ENCODE measurements at regions of chr6 and their contacts with region 1.

Region 1: DNA sequence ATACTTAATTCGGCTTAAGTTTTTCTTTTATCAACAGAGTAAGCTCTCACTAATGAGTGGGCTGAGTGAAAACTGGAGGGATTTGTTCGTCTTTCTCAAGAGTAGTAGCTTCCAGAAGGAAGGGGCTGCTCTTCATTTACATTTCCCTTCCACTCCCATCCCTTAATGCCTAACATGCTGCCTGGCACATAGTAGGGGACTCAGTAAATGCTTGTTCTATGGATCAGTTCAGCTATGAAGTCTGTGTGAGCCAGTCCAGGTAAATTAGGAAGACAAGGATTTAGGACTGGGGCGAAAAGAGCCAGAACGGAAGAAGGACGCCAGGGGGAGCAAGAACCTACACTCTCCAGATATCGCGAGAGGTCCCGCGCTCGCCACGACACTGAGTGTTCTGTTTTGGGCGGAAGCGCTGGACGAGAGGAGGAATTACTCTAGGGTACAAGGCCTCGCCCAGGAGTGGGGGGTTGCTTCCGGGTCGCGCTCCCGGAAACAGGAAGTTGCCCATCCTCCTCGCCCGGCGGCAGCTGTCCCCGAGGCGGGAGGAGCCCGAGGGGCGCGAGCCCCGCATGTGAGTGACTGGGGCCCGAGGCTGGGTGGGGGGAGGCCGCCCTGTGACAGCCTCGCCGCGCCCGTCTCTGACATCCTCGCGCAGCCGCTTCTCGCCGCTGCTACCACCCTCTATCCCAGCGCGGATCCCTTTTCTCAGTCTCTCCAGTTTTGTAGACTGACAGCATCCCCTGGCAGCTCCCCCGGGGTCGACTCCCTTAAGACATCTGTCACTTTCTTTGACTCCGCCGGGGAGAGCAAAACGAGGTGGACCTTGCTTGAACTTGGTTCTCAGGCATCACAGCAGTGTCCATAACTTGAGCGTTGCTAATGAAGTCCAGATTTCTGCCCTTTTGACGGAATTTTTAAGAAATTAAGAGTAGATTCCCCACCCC is at the start of gene C6orf89:
- DNase-seq: peak; percentile 97 to 99 (median 98)
- H3K4me3 ChIP-seq: peak within 1 kb of the TSS; percentile 74 to 96 (median 78)
- H3K27ac ChIP-seq: peak within 1 kb of the TSS; percentile 73 to 95
- H3K4me1 ChIP-seq: peaks cover 2 to 6% (median 5%) of the 10 kb centered on the region in 3 donors
- H3K27me3 ChIP-seq: no peaks in the 10 kb centered on the region
- CTCF ChIP-seq: peak; percentile 86
- total RNA-seq, gene C6orf89: 72.4 TPM

Region 2: DNA sequence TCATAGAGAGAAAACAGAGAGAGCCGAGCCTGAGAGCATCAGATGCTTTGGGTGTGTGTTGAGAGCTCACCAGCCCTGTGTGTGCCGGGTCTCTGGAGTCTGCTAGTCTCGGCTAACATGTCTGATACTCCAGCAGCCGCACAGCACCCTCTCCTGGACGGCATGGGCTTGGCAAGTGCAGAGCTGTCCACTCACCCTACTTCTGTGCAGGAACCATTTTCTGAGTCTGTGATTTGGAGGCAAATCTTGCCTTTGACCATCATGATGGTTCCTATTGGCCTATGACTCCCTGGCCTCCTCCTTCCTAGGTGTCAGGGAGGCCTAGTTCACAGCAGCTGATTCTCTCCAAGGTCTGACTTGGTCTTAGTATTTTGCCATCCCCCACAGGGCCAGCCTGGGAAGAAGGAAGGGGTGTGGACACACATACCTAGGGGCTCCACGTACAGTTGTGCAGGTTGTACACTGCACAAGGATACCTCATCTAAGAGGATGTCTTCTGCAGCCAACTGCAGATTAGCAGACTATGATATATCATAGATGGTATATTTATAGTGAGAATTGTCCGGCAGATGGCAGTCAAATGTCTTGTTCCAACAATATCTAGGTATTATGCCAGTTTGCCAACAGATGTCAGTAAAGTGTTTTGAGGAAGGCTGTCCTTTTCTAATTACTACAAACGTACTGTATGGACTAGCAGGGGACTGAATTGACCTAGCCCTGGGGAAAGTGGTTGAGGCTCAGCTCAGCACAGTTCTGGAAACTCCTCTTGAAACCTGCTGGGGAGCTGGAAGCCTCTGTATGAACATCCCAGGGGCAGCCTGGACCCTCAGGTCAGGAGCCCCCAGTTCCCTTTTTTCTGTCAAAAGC is 132.7 kb after region 1 on chr6:
- intact Hi-C with region 1: loop called (anchors 10 kb)
- DNase-seq: peak; percentile 93 to 95 (median 95)
- H3K4me3 ChIP-seq: no peak overlapping the region
- H3K27ac ChIP-seq: peak overlapping the region in 1 of 2 donors; percentile 2
- H3K4me1 ChIP-seq: peaks cover 0 to 17% (median 4%) of the 10 kb centered on the region in 3 donors
- H3K27me3 ChIP-seq: peaks cover 2% of the 10 kb centered on the region
- CTCF ChIP-seq: peak; percentile 95

Measured in kidney (tissue), 22 donors.